Cardiac septum (tissue), 1 donor: ENCODE measurements at regions of chr5 and their contacts with region 1.

Region 1: GRCh38 chr5:72451741-72452505 is 55.3 kb downstream of the ZNF366 start:
- DNase-seq: peak; percentile 82

Region 2: GRCh38 chr5:72378636-72379290 is 73.2 kb before region 1 on chr5:
- intact Hi-C with region 1: loop called (anchors 2 kb)
- DNase-seq: no peak

Region 3: DNA sequence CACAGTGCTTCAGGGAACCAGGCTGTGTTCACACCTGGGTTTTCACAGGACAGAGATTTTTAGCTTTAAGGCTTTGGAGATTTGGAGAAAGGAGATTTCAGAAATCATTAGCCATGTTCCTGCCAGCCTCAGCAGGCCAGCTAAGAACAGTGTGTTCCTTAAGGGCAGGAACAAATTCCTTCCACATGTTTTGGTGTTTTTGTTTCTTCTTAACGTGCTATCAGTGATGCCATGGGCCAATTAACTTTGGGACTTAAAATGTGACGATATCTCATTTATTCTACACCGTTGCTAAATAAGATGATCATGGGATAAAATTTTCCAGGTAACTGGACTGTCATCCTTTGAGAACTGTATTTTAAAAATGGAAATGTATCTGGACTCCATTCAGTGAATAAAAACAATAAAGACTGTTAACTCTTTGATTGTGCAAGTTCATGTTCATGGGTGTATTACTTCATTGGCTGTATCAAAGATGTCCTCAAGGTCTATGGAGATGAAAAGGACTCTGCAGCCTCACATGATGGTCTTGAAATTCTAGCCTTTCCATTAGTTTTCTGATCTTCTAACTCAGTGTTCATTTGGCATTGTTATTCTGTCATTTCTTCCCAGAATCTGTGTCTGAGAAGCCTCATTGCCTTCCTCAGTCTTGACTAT is 17.0 kb before region 1 on chr5:
- intact Hi-C with region 1: loop called (anchors 1 kb)
- DNase-seq: no peak

Region 4: DNA sequence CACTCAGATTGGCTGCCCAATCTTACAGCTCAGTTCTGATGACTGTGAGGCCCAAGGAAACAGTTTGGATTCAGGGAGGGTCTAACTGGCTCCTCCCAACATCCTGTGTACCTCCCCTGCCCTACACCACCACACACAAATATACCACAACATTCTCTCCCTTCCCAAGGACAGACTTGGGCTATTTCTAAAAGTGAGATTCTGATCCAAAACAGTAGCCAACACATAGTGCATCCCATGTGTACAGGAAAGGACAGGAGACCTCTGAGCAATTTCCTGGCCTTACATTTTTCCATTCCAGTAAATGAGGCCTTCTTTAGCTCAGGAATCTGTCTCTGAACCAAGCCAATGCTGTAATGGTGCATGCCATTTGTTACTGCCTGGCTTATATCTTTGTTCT is 34.4 kb after region 1 on chr5:
- intact Hi-C with region 1: loop called (anchors 5 kb)
- DNase-seq: no peak

Region 5: GRCh38 chr5:72499730-72500129 is 47.8 kb after region 1 on chr5:
- intact Hi-C with region 1: loop called (anchors 1 kb)
- DNase-seq: no peak

Region 6: DNA sequence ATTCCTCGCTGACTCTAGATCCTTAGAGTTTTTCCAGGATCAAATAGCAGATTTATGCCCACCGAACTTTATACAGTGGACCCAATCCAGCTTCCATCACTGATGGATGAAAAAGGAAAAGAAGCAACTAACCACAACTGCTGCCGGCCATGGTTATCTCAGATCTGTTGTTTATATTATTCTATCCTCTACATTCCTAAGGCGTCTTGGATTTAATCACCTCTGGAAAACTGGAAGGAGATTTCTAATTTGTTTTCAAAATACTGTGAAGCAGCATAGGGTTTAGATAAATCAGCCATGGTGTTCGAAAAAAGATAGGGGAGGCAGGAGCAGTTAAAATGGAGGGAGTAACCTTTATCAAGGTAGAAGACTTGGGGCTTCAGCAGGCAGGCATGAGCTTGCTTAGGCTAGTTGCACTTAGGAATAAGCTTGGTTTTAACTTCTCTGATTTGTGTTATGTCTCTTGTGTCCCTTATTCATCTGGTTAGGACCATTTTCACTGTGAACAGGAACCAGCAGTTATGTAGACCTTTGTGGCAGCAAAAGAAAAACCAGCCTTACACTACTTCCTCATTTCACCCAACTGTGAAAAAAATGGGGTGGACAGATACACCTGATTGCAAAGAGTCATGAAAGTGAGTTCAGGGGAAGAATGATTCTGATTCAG is 56.1 kb after region 1 on chr5:
- intact Hi-C with region 1: loop called (anchors 2 kb)
- DNase-seq: no peak